Endothelial cell of umbilical vein (primary cell): ENCODE measurements at regions of chr6 and their contacts with region 1.

Region 1: GRCh38 chr6:72411872-72412708 is 209.8 kb upstream of the KCNQ5 start:
- DNase-seq: peak; percentile 91
- H3K4me3 ChIP-seq: no peak overlapping the region
- H3K27ac ChIP-seq: no peak overlapping the region
- H3K4me1 ChIP-seq: no peaks in the 10 kb centered on the region
- H3K27me3 ChIP-seq: peaks cover 7 to 10% of the 10 kb centered on the region in 2 experiments
- CTCF ChIP-seq: peak; percentile 100
- POLR2A ChIP-seq: no peak

Region 2: DNA sequence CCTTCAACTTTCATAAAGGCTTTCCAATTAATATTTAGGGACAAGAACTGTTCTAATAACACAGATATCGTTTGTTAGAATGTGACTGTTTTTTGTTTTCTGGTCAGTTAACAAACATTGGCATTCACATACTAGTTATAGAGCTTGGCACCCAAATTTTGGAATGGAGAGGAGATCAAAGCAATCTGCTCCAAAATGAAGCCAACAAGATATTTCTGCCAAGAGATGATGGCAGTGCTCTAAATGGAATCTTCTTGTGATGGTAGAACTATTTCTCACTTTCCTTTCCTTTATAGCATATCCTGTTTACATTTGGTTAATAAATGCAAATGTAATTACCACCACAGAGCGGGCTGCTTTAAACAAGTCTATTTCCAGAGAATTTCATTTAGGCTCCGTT is 734.0 kb before region 1 on chr6:
- CTCF ChIA-PET with region 1: no interaction called
- POLR2A ChIA-PET with region 1: no interaction called
- dilution Hi-C with region 1: no loop called
- intact Hi-C with region 1: no loop called
- DNase-seq: no peak
- H3K4me3 ChIP-seq: no peak overlapping the region
- H3K27ac ChIP-seq: no peak overlapping the region
- H3K4me1 ChIP-seq: no peaks in the 10 kb centered on the region
- H3K27me3 ChIP-seq: peaks cover 0 to 1% of the 10 kb centered on the region in 2 experiments
- CTCF ChIP-seq: no peak
- POLR2A ChIP-seq: no peak

Region 3: GRCh38 chr6:72140795-72141194 is 271.3 kb before region 1 on chr6:
- CTCF ChIA-PET with region 1: interaction called, 3 read pairs
- POLR2A ChIA-PET with region 1: no interaction called
- dilution Hi-C with region 1: no loop called
- intact Hi-C with region 1: loop called (anchors 2 kb)
- DNase-seq: no peak
- H3K4me3 ChIP-seq: no peak overlapping the region
- H3K27ac ChIP-seq: no peak overlapping the region
- H3K4me1 ChIP-seq: no peaks in the 10 kb centered on the region
- H3K27me3 ChIP-seq: peaks cover 0 to 2% of the 10 kb centered on the region in 2 experiments
- CTCF ChIP-seq: no peak
- POLR2A ChIP-seq: no peak

Region 4: DNA sequence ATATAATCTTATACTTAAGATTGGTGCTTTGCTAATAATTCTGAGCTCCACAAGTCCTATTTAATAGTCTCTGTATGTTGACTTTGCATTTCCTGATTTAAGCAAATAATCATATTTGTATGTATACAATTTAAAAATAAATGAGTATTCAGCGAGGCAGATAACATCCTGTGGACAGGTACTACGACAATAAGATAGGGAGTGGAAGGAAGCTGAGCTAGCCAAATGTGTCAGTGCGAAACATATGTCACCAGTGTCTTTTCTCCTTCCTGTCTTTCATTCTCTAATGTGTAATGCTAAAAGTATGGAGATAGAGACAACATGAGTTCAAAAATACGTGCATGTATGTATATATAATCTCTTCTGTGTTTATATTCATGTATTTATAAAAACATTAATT is 149.8 kb before region 1 on chr6:
- CTCF ChIA-PET with region 1: interaction called, 13 read pairs
- POLR2A ChIA-PET with region 1: no interaction called
- dilution Hi-C with region 1: no loop called
- intact Hi-C with region 1: no loop called
- DNase-seq: peak; percentile 45
- H3K4me3 ChIP-seq: no peak overlapping the region
- H3K27ac ChIP-seq: no peak overlapping the region
- H3K4me1 ChIP-seq: peaks cover 26% of the 10 kb centered on the region
- H3K27me3 ChIP-seq: no peaks in the 10 kb centered on the region
- CTCF ChIP-seq: no peak
- POLR2A ChIP-seq: no peak

Region 5: DNA sequence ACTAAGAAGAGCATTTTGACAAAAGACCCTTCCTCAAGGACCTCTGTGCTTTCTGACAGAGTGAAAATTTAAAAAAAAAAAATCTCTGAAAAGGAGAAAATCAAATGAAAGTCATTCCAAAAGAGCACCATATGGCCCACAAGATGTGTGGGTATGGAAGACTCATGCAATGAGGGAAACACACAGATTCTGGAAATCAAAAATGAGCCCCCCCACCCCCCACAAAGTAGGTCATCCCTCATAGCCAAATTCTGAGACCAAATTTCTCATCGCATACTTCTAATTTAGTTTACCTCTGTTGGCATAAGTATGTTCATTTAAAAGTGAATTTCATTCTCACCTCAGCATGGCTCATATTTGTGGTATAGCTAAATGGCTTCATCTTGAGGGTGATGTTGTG is 28.5 kb after region 1 on chr6:
- CTCF ChIA-PET with region 1: interaction called, 10 read pairs
- POLR2A ChIA-PET with region 1: no interaction called
- dilution Hi-C with region 1: no loop called
- intact Hi-C with region 1: no loop called
- DNase-seq: no peak
- H3K4me3 ChIP-seq: no peak overlapping the region
- H3K27ac ChIP-seq: no peak overlapping the region
- H3K4me1 ChIP-seq: no peaks in the 10 kb centered on the region
- H3K27me3 ChIP-seq: no peaks in the 10 kb centered on the region
- CTCF ChIP-seq: no peak
- POLR2A ChIP-seq: no peak

Region 6: DNA sequence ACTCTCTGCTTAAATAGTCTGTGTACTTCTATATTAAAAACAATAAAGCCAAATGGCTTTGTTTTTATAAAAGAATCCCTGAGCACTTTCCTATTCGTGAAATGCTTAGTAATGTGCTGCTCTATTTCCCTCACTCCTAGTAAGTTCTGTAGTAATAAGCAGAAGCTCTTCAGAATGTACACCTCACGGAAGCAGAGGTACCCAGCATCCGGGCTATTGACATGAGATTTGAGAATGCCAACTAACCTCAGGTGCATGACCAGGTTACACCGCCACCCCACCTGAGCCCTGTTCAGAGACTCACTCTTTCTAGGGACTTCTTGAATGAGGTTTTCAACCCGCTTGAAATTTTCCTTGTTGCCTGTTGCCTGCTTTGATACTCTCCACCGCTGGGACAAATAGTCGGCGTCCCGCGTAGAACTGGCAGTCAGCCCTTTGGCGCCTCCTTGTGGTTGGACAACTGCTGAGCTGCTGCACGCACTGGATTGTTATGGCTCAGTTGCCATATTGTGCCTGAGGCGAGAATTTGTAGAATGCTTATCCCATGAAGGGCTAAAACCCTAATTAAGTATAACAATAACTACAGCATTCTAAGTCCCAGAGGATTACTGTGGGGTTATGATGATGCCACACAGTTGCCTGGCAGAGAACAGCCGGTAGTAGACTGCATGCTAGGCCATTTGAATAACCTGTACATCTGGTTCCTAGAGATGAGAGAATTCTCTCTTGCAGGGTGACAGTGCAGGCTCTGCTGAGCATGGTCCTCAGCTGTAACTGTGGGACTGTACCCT is 717.8 kb after region 1 on chr6:
- CTCF ChIA-PET with region 1: interaction called, 278 read pairs
- POLR2A ChIA-PET with region 1: no interaction called
- dilution Hi-C with region 1: no loop called
- intact Hi-C with region 1: loop called (anchors 1 kb)
- DNase-seq: peak; percentile 59
- H3K4me3 ChIP-seq: no peak overlapping the region
- H3K27ac ChIP-seq: no peak overlapping the region
- H3K4me1 ChIP-seq: no peaks in the 10 kb centered on the region
- H3K27me3 ChIP-seq: peaks cover 2 to 23% of the 10 kb centered on the region in 2 experiments
- CTCF ChIP-seq: peak; percentile 96 to 97
- POLR2A ChIP-seq: no peak

Region 7: DNA sequence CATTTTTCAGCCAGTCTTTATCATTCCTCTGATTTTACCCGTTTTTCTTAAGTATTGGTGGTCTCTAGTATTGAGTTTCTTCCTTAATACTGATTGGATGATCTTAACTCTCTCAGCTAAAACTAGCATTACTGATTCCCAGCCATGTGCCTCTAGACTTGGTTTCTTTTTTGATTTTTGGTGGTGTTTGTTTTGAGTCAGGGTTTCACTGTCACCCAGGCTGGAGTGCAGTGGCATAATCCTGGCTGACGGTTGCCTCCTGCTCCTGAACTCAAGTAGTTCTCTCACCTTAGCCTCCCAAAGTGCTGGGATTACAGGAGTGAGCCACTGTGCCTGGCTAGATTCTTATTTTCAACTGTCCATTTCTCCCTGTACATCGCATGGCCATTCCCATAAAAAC is 917.1 kb after region 1 on chr6:
- CTCF ChIA-PET with region 1: interaction called, 46 read pairs
- POLR2A ChIA-PET with region 1: no interaction called
- dilution Hi-C with region 1: no loop called
- intact Hi-C with region 1: loop called (anchors 1 kb)
- DNase-seq: no peak
- H3K4me3 ChIP-seq: no peak overlapping the region
- H3K27ac ChIP-seq: no peak overlapping the region
- H3K4me1 ChIP-seq: no peaks in the 10 kb centered on the region
- H3K27me3 ChIP-seq: peaks cover 6 to 14% of the 10 kb centered on the region in 2 experiments
- CTCF ChIP-seq: no peak
- POLR2A ChIP-seq: no peak